Endothelial cell of umbilical vein (primary cell): ENCODE measurements at regions of chr15 and their contacts with region 1.

Region 1: GRCh38 chr15:65824031-65824743 is 32.1 kb upstream of the DENND4A start:
- DNase-seq: peak; percentile 85
- H3K4me3 ChIP-seq: no peak overlapping the region
- H3K27ac ChIP-seq: no peak overlapping the region
- H3K4me1 ChIP-seq: peaks cover 13% of the 10 kb centered on the region
- H3K27me3 ChIP-seq: no peaks in the 10 kb centered on the region
- CTCF ChIP-seq: peak; percentile 61 to 85
- POLR2A ChIP-seq: no peak

Region 2: DNA sequence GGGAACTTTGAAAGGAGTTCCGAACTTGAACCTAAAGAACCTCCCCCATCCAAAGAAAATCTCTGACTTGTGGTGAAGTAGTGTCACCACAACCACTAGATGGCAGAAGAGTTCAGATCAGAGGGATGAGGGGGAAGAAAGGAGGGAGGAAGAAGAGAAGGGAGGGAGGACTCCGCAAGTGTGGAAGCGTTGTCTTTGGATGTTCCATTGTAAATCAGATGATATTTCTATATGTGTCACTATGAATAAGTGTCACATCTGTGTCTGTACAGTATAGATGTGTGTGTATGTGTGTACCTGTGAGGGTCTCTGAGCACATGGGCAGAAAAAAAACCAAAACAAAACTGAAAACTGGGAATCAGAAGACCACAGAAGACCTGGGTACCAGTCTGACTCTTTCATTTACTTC is 185.5 kb before region 1 on chr15:
- CTCF ChIA-PET with region 1: interaction called, 13 read pairs
- POLR2A ChIA-PET with region 1: no interaction called
- dilution Hi-C with region 1: no loop called
- intact Hi-C with region 1: loop called (anchors 1 kb)
- DNase-seq: peak; percentile 74
- H3K4me3 ChIP-seq: no peak overlapping the region
- H3K27ac ChIP-seq: no peak overlapping the region
- H3K4me1 ChIP-seq: peaks cover 20% of the 10 kb centered on the region
- H3K27me3 ChIP-seq: no peaks in the 10 kb centered on the region
- CTCF ChIP-seq: peak; percentile 72
- POLR2A ChIP-seq: no peak

Region 3: DNA sequence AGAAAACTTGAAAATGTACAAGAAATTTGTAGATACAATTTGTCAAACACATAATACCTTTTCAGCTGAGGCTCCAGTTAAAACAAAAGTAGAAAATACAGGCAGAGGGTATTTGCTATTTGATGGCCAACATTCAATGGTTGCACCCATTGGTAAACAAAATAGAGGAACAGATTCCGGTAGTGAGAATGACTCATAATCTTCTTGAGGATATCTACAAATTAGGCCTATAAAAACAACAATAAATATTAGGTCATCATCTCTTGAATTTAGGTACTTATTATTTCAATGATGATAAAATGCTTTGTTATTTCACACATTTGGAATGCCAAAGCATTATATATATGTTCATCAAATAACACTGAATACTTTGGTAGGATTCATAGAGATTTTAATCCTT is 85.5 kb before region 1 on chr15:
- CTCF ChIA-PET with region 1: interaction called, 6 read pairs
- POLR2A ChIA-PET with region 1: no interaction called
- dilution Hi-C with region 1: no loop called
- intact Hi-C with region 1: loop called (anchors 5 kb)
- DNase-seq: peak; percentile 39
- H3K4me3 ChIP-seq: no peak overlapping the region
- H3K27ac ChIP-seq: no peak overlapping the region
- H3K4me1 ChIP-seq: peaks cover 13% of the 10 kb centered on the region
- H3K27me3 ChIP-seq: no peaks in the 10 kb centered on the region
- CTCF ChIP-seq: no peak
- POLR2A ChIP-seq: no peak

Region 4: DNA sequence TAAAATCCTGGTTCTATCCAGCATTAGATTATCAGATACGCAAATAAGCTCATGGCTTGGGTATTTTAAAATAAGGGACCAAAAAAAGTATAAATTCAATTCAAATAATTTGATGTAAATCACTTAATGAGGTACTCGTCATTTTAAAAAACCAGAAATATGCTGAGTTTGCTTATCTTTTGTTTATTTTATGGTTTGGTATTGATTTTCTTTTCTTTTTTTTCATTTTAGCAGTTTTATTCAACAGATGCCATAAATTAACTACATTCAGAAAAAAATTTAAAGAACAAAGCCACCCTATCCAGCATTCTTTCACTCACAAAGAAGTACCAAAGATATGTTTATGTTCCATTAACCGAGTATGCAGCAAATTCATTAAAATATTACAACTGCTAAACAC is 54.7 kb before region 1 on chr15:
- CTCF ChIA-PET with region 1: interaction called, 11 read pairs
- POLR2A ChIA-PET with region 1: no interaction called
- dilution Hi-C with region 1: no loop called
- intact Hi-C with region 1: no loop called
- DNase-seq: no peak
- H3K4me3 ChIP-seq: no peak overlapping the region
- H3K27ac ChIP-seq: no peak overlapping the region
- H3K4me1 ChIP-seq: peaks cover 7% of the 10 kb centered on the region
- H3K27me3 ChIP-seq: no peaks in the 10 kb centered on the region
- CTCF ChIP-seq: no peak
- POLR2A ChIP-seq: no peak

Region 5: DNA sequence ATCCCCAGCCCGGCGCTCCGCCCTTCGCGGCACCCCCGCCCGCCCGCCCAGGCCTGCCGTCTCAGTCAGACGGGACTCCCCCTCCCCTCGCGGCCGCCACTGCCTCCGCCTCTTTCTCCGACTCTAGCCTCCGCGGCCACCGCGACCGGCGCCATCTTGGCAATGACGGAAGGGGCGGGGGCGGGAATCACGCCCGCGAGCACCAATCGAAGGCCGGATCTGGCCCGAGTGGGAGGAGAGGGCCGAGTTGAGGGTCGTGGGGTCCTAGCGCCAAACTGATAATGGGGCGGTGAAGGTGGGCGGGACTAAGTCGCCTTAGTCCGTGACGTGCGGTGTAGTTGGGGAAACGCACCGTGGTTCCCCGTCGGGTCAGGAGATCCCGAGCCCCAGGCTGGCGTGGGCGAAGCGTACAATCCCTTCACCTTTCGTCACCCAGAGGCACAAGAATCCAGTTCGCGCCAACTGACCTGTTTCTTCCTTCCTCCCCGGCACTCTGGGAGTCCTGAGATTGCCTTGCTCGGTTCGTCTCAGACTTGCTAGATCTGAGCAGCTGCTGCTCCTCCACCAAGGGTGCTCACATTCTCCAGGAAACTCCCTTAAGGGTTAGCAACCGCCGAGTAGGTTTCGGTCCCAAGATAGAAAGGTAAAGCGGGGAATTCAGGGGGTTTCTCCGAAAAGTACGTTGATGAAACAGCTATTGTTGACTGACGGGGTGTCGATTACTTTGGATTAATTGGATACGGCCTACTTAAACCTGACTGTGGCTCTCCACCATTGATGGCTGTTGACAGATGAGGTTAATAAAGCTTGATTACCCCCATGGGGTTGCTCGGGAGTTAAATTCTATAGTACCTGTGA is 31.8 kb before region 1 on chr15 and contains the start of gene DENND4A:
- CTCF ChIA-PET with region 1: interaction called, 29 read pairs
- POLR2A ChIA-PET with region 1: interaction called, 3 read pairs
- dilution Hi-C with region 1: no loop called
- intact Hi-C with region 1: loop called (anchors 1 kb)
- DNase-seq: peak; percentile 99
- H3K4me3 ChIP-seq: peak within 1 kb of the TSS; percentile 85 to 91 (median 89)
- H3K27ac ChIP-seq: peak within 1 kb of the TSS; percentile 81
- H3K4me1 ChIP-seq: peaks cover 40% of the 10 kb centered on the region
- H3K27me3 ChIP-seq: no peaks in the 10 kb centered on the region
- CTCF ChIP-seq: no peak
- POLR2A ChIP-seq: peak; percentile 84
- total RNA-seq, gene DENND4A: 22.2 and 25.2 TPM in 2 replicates

Region 6: GRCh38 chr15:65856821-65857455 is 32.8 kb after region 1 on chr15:
- CTCF ChIA-PET with region 1: interaction called, 11 read pairs
- POLR2A ChIA-PET with region 1: no interaction called
- dilution Hi-C with region 1: no loop called
- intact Hi-C with region 1: no loop called
- DNase-seq: peak; percentile 49
- H3K4me3 ChIP-seq: no peak overlapping the region
- H3K27ac ChIP-seq: no peak overlapping the region
- H3K4me1 ChIP-seq: no peaks in the 10 kb centered on the region
- H3K27me3 ChIP-seq: no peaks in the 10 kb centered on the region
- CTCF ChIP-seq: peak; percentile 74 to 81
- POLR2A ChIP-seq: no peak

Region 7: DNA sequence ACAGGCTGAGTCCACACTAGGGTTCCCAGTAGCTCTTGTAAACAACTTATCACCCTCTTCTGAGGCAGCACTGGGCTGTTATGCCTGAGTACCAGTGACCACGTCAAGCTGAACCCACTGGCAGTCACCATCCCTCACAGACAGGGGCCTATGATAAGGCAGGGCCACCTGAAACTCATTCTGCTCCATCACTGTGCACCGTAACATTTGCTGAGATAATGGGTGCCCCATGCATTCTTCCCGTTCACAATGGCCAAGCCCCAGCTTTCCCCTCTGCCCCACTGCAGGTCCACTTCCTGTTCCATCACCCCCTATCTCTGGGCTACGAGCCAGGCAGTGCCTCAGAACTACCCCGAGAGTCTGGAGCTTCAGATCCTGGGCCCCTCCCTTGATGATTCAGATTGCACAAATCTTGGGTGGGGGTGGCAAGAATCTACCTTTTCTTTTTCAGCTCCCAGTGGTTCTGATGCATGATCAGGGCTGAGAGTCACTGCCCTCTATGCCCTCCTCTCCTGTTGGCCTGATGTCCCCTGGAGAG is 203.2 kb after region 1 on chr15:
- CTCF ChIA-PET with region 1: no interaction called
- POLR2A ChIA-PET with region 1: no interaction called
- dilution Hi-C with region 1: no loop called
- intact Hi-C with region 1: no loop called
- DNase-seq: no peak
- H3K4me3 ChIP-seq: no peak overlapping the region
- H3K27ac ChIP-seq: no peak overlapping the region
- H3K4me1 ChIP-seq: no peaks in the 10 kb centered on the region
- H3K27me3 ChIP-seq: peaks cover 15% of the 10 kb centered on the region in 2 experiments
- CTCF ChIP-seq: no peak
- POLR2A ChIP-seq: no peak